ENCODE measurements at regions of chr14 and their contacts with region 1.

Region 1: GRCh38 chr14:24058260-24058950 is 6.6 kb downstream of the CARMIL3 start:
- DNase-seq: peak in 3 of 5 donors; percentile 31 to 81 (median 65)
- ATAC-seq: peak; percentile 71 to 91 (median 78)
- H3K4me3 ChIP-seq: no peak overlapping the region
- H3K27ac ChIP-seq: no peak overlapping the region
- H3K4me1 ChIP-seq: peaks cover 0 to 2% (median 0%) of the 10 kb centered on the region in 12 donors
- H3K27me3 ChIP-seq: peaks cover 0 to 6% (median 0%) of the 10 kb centered on the region in 9 donors
- CTCF ChIP-seq: peak; percentile 29 to 94 (median 75)
- POLR2A ChIP-seq: no peak

Region 2: GRCh38 chr14:24086193-24086955 is 28.0 kb after region 1 on chr14:
- intact Hi-C with region 1: loop called (anchors 1 to 5 kb)
- DNase-seq: no peak
- ATAC-seq: no peak
- H3K4me3 ChIP-seq: no peak overlapping the region
- H3K27ac ChIP-seq: no peak overlapping the region
- H3K4me1 ChIP-seq: peaks cover 0 to 6% (median 4%) of the 10 kb centered on the region in 12 donors
- H3K27me3 ChIP-seq: peaks cover 0 to 10% (median 0%) of the 10 kb centered on the region in 9 donors
- CTCF ChIP-seq: no peak
- POLR2A ChIP-seq: no peak

Region 3: DNA sequence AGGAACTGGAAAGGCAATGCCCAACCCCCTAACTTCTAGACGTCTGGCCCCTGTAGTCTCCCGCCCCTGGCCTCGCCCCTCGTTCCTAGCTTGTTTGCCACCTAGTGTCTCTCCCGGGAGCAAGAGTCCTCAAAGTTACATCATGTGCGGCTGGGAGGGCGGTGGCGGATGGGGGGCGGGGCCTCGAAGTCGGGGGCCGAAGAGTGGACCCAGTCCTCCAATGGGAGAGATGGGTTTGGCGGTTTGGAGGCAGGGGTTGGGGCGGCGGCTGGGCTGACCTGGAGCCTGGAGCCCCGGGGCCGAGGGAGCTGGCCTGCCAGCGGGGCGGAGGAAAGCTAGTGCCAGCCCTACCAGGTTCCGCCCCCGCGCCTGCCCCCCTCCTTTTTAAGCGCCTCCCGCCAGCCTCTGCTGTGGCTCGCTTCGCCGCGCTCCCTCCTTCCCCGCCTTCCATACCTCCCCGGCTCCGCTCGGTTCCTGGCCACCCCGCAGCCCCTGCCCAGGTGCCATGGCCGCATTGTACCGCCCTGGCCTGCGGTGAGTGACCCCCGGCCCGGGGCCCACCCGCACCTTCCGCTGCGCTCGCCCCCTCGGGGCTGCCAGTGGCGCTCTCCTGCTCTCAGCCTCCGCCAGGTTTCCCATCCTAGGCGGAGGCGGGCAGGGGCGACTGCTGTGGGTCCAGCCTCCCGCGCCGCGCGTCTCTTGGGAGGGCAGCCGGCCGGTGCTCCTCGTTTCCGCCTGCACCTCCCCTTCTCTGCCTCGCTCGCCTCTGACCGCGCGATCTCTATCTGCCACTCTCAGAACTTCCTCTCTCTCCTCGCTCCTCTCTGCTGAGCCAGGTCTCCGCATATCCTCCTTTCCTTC is 35.7 kb after region 1 on chr14 and contains the start of gene PCK2:
- intact Hi-C with region 1: loop called in 9 of 10 experiments (anchors 1 to 5 kb)
- DNase-seq: peak; percentile 85 to 94 (median 91)
- ATAC-seq: peak; percentile 76 to 92 (median 90)
- H3K4me3 ChIP-seq: peak within 1 kb of the TSS; percentile 73 to 94 (median 80)
- H3K27ac ChIP-seq: peak within 1 kb of the TSS; percentile 77 to 96 (median 94)
- H3K4me1 ChIP-seq: peaks cover 0 to 26% (median 14%) of the 10 kb centered on the region in 12 donors
- H3K27me3 ChIP-seq: no peaks in the 10 kb centered on the region
- CTCF ChIP-seq: peak in 1 of 12 donors; percentile 14
- POLR2A ChIP-seq: peak in 1 of 2 donors; percentile 62
- total RNA-seq, gene PCK2: 2.1 to 14.6 (median 3.9) TPM

Region 4: GRCh38 chr14:24108336-24108874 is 50.0 kb after region 1 on chr14:
- intact Hi-C with region 1: loop called in 6 of 10 experiments (anchors 2 to 5 kb)
- DNase-seq: no peak
- ATAC-seq: no peak
- H3K4me3 ChIP-seq: no peak overlapping the region
- H3K27ac ChIP-seq: peak overlapping the region in 3 of 12 donors; percentile 7 to 63 (median 44)
- H3K4me1 ChIP-seq: peaks cover 0 to 22% (median 8%) of the 10 kb centered on the region in 12 donors
- H3K27me3 ChIP-seq: no peaks in the 10 kb centered on the region
- CTCF ChIP-seq: no peak
- POLR2A ChIP-seq: no peak

Region 5: GRCh38 chr14:24299255-24300195 is 241.1 kb after region 1 on chr14 and contains the starts of genes DHRS1 and NOP9:
- intact Hi-C with region 1: loop called in 1 of 10 experiments (anchors 5 kb)
- DNase-seq: peak; percentile 90 to 96 (median 92)
- ATAC-seq: peak; percentile 83 to 94 (median 92)
- H3K4me3 ChIP-seq: peak within 1 kb of the TSS; percentile 75 to 99 (median 95)
- H3K27ac ChIP-seq: peak within 1 kb of the TSS; percentile 1 to 91 (median 80)
- H3K4me1 ChIP-seq: peaks cover 0 to 40% (median 24%) of the 10 kb centered on the region in 12 donors
- H3K27me3 ChIP-seq: no peaks in the 10 kb centered on the region
- CTCF ChIP-seq: no peak
- POLR2A ChIP-seq: peak in 1 of 2 donors; percentile 55
- total RNA-seq, gene DHRS1: 6.3 to 18.1 (median 11.3) TPM
- total RNA-seq, gene NOP9: 22.1 to 34.0 (median 27.8) TPM

Region 6: DNA sequence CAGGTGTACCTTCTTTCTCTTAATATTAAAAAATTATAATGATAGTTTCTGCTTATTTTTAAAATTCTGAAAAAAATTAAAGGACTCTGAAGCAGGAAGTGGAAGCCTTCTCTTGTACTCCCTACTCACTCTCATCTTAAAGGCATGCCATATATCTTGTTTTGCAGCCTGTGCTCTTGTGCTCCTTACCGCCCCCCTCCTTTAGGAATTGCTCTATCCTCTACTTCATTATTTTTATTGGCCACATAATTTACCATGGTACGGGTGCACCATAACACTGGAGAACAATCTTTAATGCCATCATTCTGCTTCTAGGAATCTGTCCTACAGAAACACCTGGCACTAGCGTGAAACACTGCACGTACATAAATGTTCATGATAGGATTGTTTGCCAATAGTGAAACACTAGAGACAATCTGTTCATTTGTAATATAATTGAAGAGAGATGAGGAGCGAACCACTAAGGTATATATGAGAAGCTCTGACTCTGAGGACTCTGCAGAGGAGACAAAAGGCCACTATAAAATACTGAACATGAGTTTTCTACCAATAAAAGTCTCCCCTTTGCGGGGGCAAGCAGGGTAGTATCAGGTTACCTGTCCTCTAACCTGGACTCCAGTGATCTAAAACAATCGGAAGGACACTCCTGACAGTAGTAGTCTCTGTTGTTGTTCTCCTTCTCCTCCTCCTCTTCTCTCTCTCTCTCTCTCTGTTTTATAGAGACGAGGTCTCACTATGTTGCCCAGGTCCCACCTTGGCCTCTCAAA is 334.1 kb after region 1 on chr14:
- intact Hi-C with region 1: no loop called
- DNase-seq: no peak
- ATAC-seq: no peak
- H3K4me3 ChIP-seq: no peak overlapping the region
- H3K27ac ChIP-seq: no peak overlapping the region
- H3K4me1 ChIP-seq: peaks cover 0 to 12% (median under 1%) of the 10 kb centered on the region in 12 donors
- H3K27me3 ChIP-seq: no peaks in the 10 kb centered on the region
- CTCF ChIP-seq: no peak
- POLR2A ChIP-seq: no peak

Measured in heart left ventricle (tissue), 16 donors.